BJ (cell line): ENCODE measurements at regions of chr16 and their contacts with region 1.

Region 1: GRCh38 chr16:87278191-87279095 is 38.7 kb downstream of the C16orf95 start:
- DNase-seq: peak; percentile 19
- H3K4me3 ChIP-seq: no peak overlapping the region
- H3K27me3 ChIP-seq: no peaks in the 10 kb centered on the region
- CTCF ChIP-seq: peak; percentile 96

Region 2: GRCh38 chr16:87076950-87077749 is 201.3 kb before region 1 on chr16:
- CTCF ChIA-PET with region 1: interaction called, 16 read pairs
- POLR2A ChIA-PET with region 1: no interaction called
- DNase-seq: no peak
- H3K4me3 ChIP-seq: no peak overlapping the region
- H3K27me3 ChIP-seq: no peaks in the 10 kb centered on the region; the same call in 1 of the 2 replicates
- CTCF ChIP-seq: peak; percentile 79

Region 3: DNA sequence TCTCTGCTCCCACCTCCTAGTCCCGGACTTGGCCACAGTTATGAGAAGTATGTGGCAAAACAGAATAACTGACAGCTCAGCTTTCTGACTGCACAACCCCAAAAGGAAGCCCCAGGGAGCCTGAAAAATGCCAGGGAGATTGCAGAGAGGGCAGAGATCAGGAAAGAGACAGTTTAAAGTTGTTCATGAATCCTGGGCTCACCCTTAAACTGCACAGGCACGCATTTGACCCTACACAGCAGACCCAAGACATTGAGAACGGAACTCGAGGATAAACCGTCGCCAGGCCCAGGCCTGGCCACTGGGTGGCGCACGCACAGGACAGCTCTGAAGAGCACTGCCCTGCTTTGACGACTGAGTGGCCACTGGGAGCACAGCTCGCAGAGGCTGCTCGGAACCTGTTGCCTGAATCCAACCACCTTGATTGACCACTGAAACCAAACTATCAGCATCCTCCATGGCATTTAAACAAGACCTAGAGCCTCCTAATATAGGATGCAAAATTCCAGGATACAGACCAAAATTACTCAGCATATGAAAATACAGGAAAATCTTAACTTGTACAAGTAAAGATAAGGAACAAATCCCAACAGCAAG is 75.3 kb before region 1 on chr16:
- CTCF ChIA-PET with region 1: interaction called, 25 read pairs
- POLR2A ChIA-PET with region 1: no interaction called
- DNase-seq: no peak
- H3K4me3 ChIP-seq: no peak overlapping the region
- H3K27me3 ChIP-seq: no peaks in the 10 kb centered on the region
- CTCF ChIP-seq: peak; percentile 97

Region 4: GRCh38 chr16:87252269-87252970 is 26.0 kb before region 1 on chr16:
- CTCF ChIA-PET with region 1: no interaction called
- POLR2A ChIA-PET with region 1: no interaction called
- DNase-seq: no peak
- H3K4me3 ChIP-seq: no peak overlapping the region
- H3K27me3 ChIP-seq: no peaks in the 10 kb centered on the region
- CTCF ChIP-seq: no peak

Region 5: DNA sequence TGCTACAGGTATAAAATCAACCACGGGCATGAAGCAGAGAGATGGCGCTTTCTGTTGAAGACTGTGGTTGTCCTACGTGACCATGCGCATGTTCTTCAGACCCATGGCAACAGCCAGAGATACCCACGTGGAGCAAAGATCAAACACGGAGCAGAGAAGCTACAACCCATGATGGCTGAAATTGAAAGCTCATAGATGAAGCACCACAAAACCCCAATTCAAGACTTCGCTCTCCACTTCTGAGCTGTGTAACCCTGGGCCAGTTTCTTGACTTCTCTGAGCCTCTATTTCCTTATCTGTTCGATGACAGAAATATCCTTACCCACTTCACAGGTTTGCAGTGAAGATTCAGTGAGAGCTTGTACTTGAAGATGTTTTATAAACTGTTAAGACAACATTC is 10.9 kb before region 1 on chr16:
- CTCF ChIA-PET with region 1: interaction called, 19 read pairs
- POLR2A ChIA-PET with region 1: no interaction called
- DNase-seq: no peak
- H3K4me3 ChIP-seq: no peak overlapping the region
- H3K27me3 ChIP-seq: no peaks in the 10 kb centered on the region
- CTCF ChIP-seq: no peak

Region 6: DNA sequence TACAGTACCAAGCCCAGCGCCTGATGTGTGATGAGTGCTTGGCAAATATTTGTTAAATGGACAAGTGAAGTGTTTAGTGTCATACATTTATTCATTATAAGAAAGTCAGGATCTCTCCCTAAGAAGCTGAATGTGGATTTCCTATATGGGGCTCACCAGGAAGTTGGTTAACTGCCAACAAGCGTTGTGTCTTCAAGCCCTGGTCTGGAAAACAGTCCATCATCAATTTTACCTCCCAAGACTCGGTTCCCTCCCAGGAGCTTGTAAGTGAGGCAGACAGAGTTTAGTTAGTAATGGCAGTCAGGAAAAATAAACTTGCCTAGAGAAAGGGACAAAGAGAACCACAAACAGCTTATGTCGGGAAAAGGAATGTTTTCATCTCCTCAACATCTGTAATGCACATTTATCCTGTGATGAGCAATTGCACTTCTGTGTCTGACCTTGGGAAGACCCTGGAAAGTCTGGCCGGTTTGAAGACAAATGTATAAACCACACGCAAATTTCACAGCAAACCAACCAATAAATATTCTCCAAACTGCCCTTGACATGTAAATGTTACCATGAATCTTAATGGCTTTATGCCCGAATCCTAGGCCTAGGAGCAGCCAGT is 10.4 kb after region 1 on chr16:
- CTCF ChIA-PET with region 1: interaction called, 11 read pairs
- POLR2A ChIA-PET with region 1: no interaction called
- DNase-seq: peak; percentile 94
- H3K4me3 ChIP-seq: no peak overlapping the region
- H3K27me3 ChIP-seq: no peaks in the 10 kb centered on the region
- CTCF ChIP-seq: no peak